ENCODE measurements at regions of chr5 and their contacts with region 1.

Region 1: GRCh38 chr5:59367791-59368394 is 525.6 kb downstream of the PDE4D start:
- DNase-seq: no peak
- H3K4me3 ChIP-seq: no peak overlapping the region
- H3K27ac ChIP-seq: no peak overlapping the region
- H3K4me1 ChIP-seq: no peaks in the 10 kb centered on the region
- H3K27me3 ChIP-seq: no peaks in the 10 kb centered on the region
- CTCF ChIP-seq: peak in 2 of 3 experiments; percentile 48 to 65

Region 2: GRCh38 chr5:59188419-59189225 is 179.3 kb before region 1 on chr5:
- intact Hi-C with region 1: loop called (anchors 2 kb)
- DNase-seq: peak in 1 of 2 donors; percentile 80
- H3K4me3 ChIP-seq: no peak overlapping the region
- H3K27ac ChIP-seq: no peak overlapping the region
- H3K4me1 ChIP-seq: no peaks in the 10 kb centered on the region
- H3K27me3 ChIP-seq: no peaks in the 10 kb centered on the region
- CTCF ChIP-seq: peak; percentile 62 to 79 (median 69)